ENCODE measurements at regions of chr1 and their contacts with region 1.

Region 1: DNA sequence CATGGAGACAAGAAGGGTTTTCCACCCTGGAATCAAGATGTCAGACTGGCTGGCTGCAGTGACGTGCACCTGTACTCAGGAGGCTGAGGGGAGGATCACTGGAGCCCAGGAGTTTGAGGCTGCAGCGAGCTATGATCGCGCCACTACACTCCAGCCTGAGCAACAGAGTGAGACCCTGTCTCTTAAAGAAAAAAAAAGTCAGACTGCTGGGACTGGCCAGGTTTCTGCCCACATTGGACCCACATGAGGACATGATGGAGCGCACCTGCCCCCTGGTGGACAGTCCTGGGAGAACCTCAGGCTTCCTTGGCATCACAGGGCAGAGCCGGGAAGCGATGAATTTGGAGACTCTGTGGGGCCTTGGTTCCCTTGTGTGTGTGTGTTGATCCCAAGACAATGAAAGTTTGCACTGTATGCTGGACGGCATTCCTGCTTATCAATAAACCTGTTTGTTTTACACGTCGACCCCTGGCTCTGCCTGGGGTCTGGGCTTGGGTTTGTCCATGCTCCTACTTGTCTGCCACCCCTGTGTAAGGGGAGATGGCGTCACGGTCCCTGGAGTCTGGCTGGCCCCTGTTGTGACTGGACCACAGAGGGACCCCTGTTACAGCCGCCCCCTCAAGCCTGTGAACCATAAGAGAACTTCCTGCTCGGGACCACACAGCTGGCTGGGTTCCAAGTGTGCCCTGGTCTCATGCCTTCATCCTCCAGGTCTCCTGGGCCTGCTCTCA is 20.9 kb upstream of the VPS13D start:
- DNase-seq: peak; percentile 81
- ATAC-seq: peak; percentile 71
- H3K4me3 Mint-ChIP-seq: peak overlapping the region; percentile 52
- H3K27ac Mint-ChIP-seq: peak overlapping the region; percentile 86
- H3K4me1 Mint-ChIP-seq: peaks cover 64% of the 10 kb centered on the region
- H3K27me3 Mint-ChIP-seq: no peaks in the 10 kb centered on the region
- CTCF ChIP-seq: peak; percentile 76

Region 2: GRCh38 chr1:12132092-12132491 is 76.8 kb before region 1 on chr1:
- CTCF ChIA-PET with region 1: interaction called, 261 read pairs
- POLR2A ChIA-PET with region 1: interaction called, 103 read pairs
- intact Hi-C with region 1: no loop called
- DNase-seq: no peak
- ATAC-seq: no peak
- H3K4me3 Mint-ChIP-seq: no peak overlapping the region
- H3K27ac Mint-ChIP-seq: peak overlapping the region; percentile 85
- H3K4me1 Mint-ChIP-seq: peaks cover 35% of the 10 kb centered on the region
- H3K27me3 Mint-ChIP-seq: no peaks in the 10 kb centered on the region
- CTCF ChIP-seq: no peak

Region 3: GRCh38 chr1:12166834-12167492 is 42.0 kb before region 1 on chr1 and contains the start of gene TNFRSF1B:
- CTCF ChIA-PET with region 1: interaction called, 3 read pairs
- POLR2A ChIA-PET with region 1: interaction called, 7 read pairs
- intact Hi-C with region 1: loop called (anchors 2 kb)
- DNase-seq: peak; percentile 70
- ATAC-seq: peak; percentile 72
- H3K4me3 Mint-ChIP-seq: peak within 1 kb of the TSS; percentile 97
- H3K27ac Mint-ChIP-seq: peak within 1 kb of the TSS; percentile 92
- H3K4me1 Mint-ChIP-seq: peaks cover 71% of the 10 kb centered on the region
- H3K27me3 Mint-ChIP-seq: no peaks in the 10 kb centered on the region
- CTCF ChIP-seq: no peak
- total RNA-seq, gene TNFRSF1B: 89.0 and 98.6 TPM in 2 replicates

Region 4: DNA sequence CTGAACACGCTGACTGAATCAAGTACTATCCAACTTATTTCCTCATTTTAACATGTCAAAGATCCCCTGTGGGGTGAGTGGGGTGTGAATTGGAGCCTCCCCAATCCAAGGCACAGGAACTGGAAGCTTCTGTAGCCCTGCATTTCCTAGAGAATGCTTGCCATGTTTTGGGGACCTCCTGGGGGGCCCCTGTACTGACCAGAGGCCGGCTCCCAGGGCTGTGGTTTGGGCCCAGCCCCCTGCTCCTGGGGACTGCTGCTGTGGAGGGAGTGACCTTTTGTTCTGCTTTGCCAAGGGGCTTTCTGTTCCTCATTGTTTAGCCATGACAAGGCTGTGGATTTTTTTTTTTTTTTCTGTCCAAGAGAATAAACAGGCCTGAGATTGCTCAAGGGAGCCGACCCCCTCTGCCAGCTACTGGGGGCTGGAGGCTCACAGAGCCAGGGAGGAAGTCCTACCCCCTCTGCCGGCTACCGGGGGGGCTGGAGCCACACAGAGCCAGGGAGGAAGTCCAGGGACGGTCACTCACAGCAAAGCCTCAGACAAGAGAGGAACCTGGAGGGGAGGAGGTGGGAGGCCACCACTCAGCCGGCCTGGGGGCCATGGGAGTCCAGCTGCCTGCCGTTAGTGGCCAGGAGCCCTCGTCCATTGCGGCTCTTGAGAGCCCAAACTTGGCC is 24.8 kb before region 1 on chr1:
- CTCF ChIA-PET with region 1: interaction called, 4 read pairs
- POLR2A ChIA-PET with region 1: no interaction called
- intact Hi-C with region 1: loop called (anchors 2 kb)
- DNase-seq: no peak
- ATAC-seq: peak; percentile 71
- H3K4me3 Mint-ChIP-seq: peak overlapping the region; percentile 48
- H3K27ac Mint-ChIP-seq: peak overlapping the region; percentile 70
- H3K4me1 Mint-ChIP-seq: peaks cover 73% of the 10 kb centered on the region
- H3K27me3 Mint-ChIP-seq: no peaks in the 10 kb centered on the region
- CTCF ChIP-seq: no peak

Region 5: DNA sequence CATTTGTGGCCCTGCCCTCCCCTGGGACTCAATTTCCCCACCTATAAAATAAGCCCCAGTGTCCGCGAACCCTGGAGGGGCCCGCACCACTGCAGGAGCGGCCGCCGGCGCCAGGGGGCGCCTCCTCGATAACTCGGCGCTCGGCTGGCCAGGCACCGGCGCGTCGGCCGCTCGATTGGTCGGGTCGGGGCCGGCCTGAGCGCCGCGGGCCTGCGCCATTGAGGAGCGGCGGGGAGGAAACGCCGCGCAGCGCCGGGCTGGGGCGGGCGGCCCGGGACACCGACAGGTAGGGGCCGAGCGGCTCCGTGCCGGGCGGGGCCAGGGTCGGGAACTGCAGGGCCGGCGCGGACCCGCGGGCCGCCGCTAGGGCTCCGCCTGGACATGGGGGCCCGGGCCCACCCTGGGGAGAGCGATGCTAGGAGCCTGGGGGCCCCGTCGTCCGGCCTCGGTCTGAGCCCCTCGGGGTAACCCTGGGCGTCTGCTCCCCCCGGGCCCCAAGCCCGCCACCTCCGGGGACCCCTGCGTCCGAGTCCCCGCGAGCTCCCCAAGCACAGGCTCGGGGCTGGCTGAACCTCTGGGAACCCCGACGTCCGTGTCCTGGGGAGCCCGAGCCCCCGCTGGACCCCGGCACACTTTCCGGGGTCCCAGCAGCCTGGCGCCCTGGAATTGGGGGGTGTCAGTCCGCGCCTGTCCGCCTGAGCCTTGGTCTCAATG is 21.1 kb after region 1 on chr1 and contains the start of gene VPS13D:
- CTCF ChIA-PET with region 1: interaction called, 5 read pairs
- POLR2A ChIA-PET with region 1: interaction called, 13 read pairs
- intact Hi-C with region 1: loop called (anchors 1 kb)
- DNase-seq: peak; percentile 87
- ATAC-seq: peak; percentile 96
- H3K4me3 Mint-ChIP-seq: peak within 1 kb of the TSS; percentile 86
- H3K27ac Mint-ChIP-seq: peak within 1 kb of the TSS; percentile 41
- H3K4me1 Mint-ChIP-seq: peaks cover 19% of the 10 kb centered on the region
- H3K27me3 Mint-ChIP-seq: peaks cover 3% of the 10 kb centered on the region
- CTCF ChIP-seq: peak; percentile 26
- total RNA-seq, gene VPS13D: 52.6 and 64.5 TPM in 2 replicates

Region 6: GRCh38 chr1:12326986-12327385 is 118.1 kb after region 1 on chr1:
- CTCF ChIA-PET with region 1: no interaction called
- POLR2A ChIA-PET with region 1: no interaction called
- intact Hi-C with region 1: no loop called
- DNase-seq: no peak
- ATAC-seq: no peak
- H3K4me3 Mint-ChIP-seq: no peak overlapping the region
- H3K27ac Mint-ChIP-seq: no peak overlapping the region
- H3K4me1 Mint-ChIP-seq: no peaks in the 10 kb centered on the region
- H3K27me3 Mint-ChIP-seq: no peaks in the 10 kb centered on the region
- CTCF ChIP-seq: no peak

Region 7: DNA sequence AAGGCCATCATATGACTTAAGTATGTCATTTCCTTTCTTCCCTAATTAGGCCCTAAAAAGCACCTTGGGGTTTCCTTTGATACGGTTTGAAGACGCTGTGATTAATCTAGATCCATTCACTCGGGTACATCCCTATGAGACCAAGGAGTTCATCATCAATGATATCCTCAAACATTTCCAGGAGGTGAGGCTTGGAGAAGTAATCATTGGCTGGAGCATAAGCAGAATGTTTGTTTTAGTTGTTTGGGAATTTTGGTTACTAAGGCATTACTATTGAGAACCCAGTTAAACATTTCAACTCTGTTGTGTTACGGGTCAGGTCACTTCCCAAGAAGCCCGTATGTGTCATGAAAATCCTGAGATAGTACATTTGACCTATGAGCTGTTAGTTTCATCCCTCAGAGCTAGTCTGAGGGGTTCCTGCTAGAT is 206.1 kb after region 1 on chr1:
- CTCF ChIA-PET with region 1: no interaction called
- POLR2A ChIA-PET with region 1: no interaction called
- intact Hi-C with region 1: no loop called
- DNase-seq: no peak
- ATAC-seq: no peak
- H3K4me3 Mint-ChIP-seq: no peak overlapping the region
- H3K27ac Mint-ChIP-seq: no peak overlapping the region
- H3K4me1 Mint-ChIP-seq: peaks cover 9% of the 10 kb centered on the region
- H3K27me3 Mint-ChIP-seq: no peaks in the 10 kb centered on the region
- CTCF ChIP-seq: no peak

Measured in activated B cell treated with CpG ODN at 0.5 μM for 24 hours (primary cell).